ENCODE measurements at regions of chr10 and their contacts with region 1.

Region 1: GRCh38 chr10:43689955-43690771 is 41.5 kb upstream of the ZNF32 start:
- DNase-seq: peak; percentile 89 to 95 (median 91)
- ATAC-seq: peak; percentile 94 to 98 (median 97)
- H3K4me3 ChIP-seq: peak overlapping the region; percentile 41 to 68 (median 65)
- H3K27ac ChIP-seq: peak overlapping the region; percentile 85 to 97 (median 90)
- H3K4me1 ChIP-seq: peaks cover 0 to 56% (median 29%) of the 10 kb centered on the region in 12 donors
- H3K27me3 ChIP-seq: no peaks in the 10 kb centered on the region
- CTCF ChIP-seq: peak; percentile 74 to 94 (median 86)
- POLR2A ChIP-seq: peak in 1 of 2 donors; percentile 34

Region 2: DNA sequence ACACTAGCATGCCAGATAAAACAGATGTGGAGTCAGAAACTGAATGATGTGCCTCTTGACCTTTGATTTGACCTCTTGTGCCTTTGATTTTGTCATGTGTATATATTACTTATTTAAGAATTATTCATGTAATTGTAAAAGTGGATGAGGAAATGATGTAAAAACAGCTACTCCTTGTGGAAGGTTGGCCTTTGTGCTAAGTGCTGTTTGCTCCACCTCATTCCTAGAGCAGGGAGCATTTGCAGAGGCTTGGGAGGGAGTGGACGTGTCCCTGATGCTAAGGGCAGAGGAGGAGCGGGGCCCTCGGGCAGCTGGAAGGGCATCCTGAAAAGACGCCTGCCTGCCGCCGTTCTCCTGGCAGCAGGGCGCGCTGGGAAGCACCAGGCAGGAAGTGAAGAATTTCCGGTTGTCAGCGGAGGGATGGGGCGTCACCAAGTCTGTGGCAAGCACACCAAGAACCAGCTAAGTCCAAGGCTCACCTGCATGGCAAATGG is 156.1 kb after region 1 on chr10:
- intact Hi-C with region 1: loop called in 4 of 10 experiments (anchors 5 to 10 kb)
- DNase-seq: peak in 4 of 5 donors; percentile 45 to 78 (median 70)
- ATAC-seq: peak in 3 of 4 donors; percentile 61 to 81 (median 64)
- H3K4me3 ChIP-seq: peak overlapping the region in 5 of 12 donors; percentile 0 to 31 (median 8)
- H3K27ac ChIP-seq: peak overlapping the region; percentile 43 to 91 (median 67)
- H3K4me1 ChIP-seq: peaks cover 0 to 36% (median 15%) of the 10 kb centered on the region in 12 donors
- H3K27me3 ChIP-seq: no peaks in the 10 kb centered on the region
- CTCF ChIP-seq: peak in 3 of 12 donors; percentile 7 to 28 (median 23)
- POLR2A ChIP-seq: no peak

Region 3: DNA sequence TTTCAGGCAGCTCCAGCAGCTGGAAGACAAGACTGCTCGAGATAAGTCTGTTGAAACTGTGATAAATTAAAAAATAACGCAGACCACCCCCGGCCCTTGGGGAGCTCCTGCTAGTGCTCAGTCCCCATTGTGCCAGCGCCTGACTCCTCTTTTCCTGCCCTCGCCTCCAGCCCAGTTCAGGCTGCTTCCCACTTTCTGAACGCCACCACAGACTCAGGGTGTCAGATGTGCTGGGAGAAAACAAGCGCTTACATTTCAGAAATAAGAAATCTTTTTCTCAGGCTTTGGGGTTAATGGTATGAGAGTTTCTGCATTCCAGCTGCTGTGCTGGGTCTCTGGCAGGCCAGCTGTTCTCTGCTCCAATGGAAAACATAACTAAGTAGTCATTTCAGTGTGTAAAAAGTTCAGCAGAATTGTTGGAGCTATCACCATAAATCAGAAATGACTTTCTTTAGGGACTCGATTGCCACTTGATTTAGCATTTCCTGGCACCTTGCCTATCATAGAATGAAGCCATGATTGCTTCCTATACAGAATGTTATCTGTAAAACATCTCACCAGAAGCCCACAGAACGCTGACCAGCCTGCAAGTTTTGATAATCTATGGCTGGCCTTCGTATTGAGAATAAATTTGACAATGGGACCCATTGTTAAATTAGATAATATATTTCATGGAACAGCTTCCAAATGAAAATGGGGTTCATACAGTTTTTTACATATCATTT is 215.5 kb after region 1 on chr10:
- intact Hi-C with region 1: loop called in 5 of 10 experiments (anchors 2 to 10 kb)
- DNase-seq: peak in 4 of 5 donors; percentile 72 to 80 (median 74)
- ATAC-seq: peak; percentile 52 to 70 (median 68)
- H3K4me3 ChIP-seq: no peak overlapping the region
- H3K27ac ChIP-seq: peak overlapping the region; percentile 47 to 79 (median 58)
- H3K4me1 ChIP-seq: peaks cover 9 to 47% (median 26%) of the 10 kb centered on the region in 12 donors
- H3K27me3 ChIP-seq: no peaks in the 10 kb centered on the region
- CTCF ChIP-seq: no peak
- POLR2A ChIP-seq: no peak

Region 4: GRCh38 chr10:43921881-43922280 is 231.7 kb after region 1 on chr10:
- intact Hi-C with region 1: no loop called
- DNase-seq: no peak
- ATAC-seq: peak in 1 of 4 donors; percentile 29
- H3K4me3 ChIP-seq: no peak overlapping the region
- H3K27ac ChIP-seq: no peak overlapping the region
- H3K4me1 ChIP-seq: peaks cover 0 to 15% (median 0%) of the 10 kb centered on the region in 12 donors
- H3K27me3 ChIP-seq: no peaks in the 10 kb centered on the region
- CTCF ChIP-seq: no peak
- POLR2A ChIP-seq: no peak

Region 5: GRCh38 chr10:44024356-44025116 is 334.4 kb after region 1 on chr10:
- intact Hi-C with region 1: loop called in 2 of 10 experiments (anchors 5 to 10 kb)
- DNase-seq: no peak
- ATAC-seq: no peak
- H3K4me3 ChIP-seq: no peak overlapping the region
- H3K27ac ChIP-seq: no peak overlapping the region
- H3K4me1 ChIP-seq: peaks cover 0 to 15% (median 2%) of the 10 kb centered on the region in 12 donors
- H3K27me3 ChIP-seq: no peaks in the 10 kb centered on the region
- CTCF ChIP-seq: no peak
- POLR2A ChIP-seq: no peak

Region 6: GRCh38 chr10:44310762-44311562 is 620.8 kb after region 1 on chr10:
- intact Hi-C with region 1: loop called (anchors 1 to 5 kb)
- DNase-seq: peak; percentile 88 to 93 (median 90)
- ATAC-seq: peak; percentile 84 to 99 (median 97)
- H3K4me3 ChIP-seq: peak overlapping the region in 10 of 12 donors; percentile 38 to 60 (median 50)
- H3K27ac ChIP-seq: peak overlapping the region in 6 of 12 donors; percentile 18 to 73 (median 48)
- H3K4me1 ChIP-seq: peaks cover 0 to 12% (median 10%) of the 10 kb centered on the region in 12 donors
- H3K27me3 ChIP-seq: no peaks in the 10 kb centered on the region
- CTCF ChIP-seq: peak; percentile 79 to 100 (median 98)
- POLR2A ChIP-seq: no peak

Measured in heart left ventricle (tissue), 16 donors.